GM10248 (cell line): ENCODE measurements at regions of chr11 and their contacts with region 1.

Region 1: DNA sequence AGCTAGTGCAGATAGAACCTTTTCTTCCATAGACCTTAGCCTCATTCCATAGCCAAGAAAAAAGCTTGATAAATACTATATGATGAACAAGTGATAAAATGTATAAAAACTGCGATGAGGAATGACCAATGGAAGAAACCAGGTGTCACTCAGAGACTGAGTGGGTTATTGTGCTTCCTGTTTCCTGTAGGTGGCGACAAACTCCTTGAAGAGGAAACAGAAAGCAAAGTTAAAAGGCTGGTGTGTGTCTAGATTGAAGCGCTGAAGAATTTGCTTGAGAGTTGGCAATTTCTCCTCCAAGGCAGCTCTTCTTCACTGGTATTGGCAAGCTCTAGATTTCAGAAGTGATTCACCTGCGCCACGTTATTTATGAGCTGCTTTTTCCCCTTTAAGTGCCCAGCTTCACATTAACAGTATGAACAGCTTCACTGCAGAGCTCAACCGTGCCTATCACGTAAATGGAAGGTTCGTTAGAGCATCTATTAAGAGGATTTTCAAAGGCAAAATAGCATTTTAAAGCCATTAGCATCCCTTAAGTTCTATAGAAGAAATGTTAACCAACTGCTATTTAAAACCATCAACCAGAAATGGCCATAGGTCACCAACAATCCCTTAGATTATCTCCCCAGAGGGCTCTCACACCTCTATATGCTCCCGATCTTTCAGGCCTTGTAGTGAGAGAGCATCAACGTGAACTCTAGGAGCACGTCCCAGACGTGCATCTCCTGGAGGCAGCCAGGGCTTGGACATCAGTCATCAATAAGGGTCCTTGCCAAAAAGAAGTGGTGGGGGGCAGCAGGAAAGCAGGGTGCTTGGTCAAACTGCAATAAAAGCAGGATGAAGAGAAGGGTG is 179.4 kb downstream of the CADM1 start:
- DNase-seq: peak; percentile 44
- CTCF ChIP-seq: peak; percentile 75

Region 2: GRCh38 chr11:115314330-115314920 is 10.4 kb before region 1 on chr11:
- CTCF ChIA-PET with region 1: interaction called, 31 read pairs
- POLR2A ChIA-PET with region 1: no interaction called
- DNase-seq: no peak
- CTCF ChIP-seq: no peak

Region 3: GRCh38 chr11:115334932-115335788 is 10.4 kb after region 1 on chr11:
- CTCF ChIA-PET with region 1: interaction called, 20 read pairs
- POLR2A ChIA-PET with region 1: no interaction called
- DNase-seq: peak; percentile 9
- CTCF ChIP-seq: peak; percentile 61

Region 4: DNA sequence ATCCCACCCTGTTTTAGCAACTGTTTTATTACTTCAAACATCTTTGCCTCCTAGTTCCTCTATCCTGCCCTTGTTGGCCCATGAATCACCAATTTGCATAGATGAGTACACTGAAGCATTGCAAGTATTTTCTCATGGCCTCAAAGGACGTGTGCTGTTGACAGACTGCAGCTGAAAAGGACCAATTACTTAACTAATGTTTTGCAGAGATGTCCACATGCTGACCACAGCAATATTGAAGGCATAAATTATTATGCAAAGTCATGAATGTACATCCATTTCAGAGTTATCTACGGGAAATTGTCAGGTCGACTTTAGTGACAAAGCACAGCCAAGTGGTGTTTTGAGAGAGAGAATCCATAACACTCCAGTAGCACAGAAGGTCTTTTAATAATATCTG is 114.6 kb after region 1 on chr11:
- CTCF ChIA-PET with region 1: no interaction called
- POLR2A ChIA-PET with region 1: no interaction called
- DNase-seq: no peak
- CTCF ChIP-seq: no peak